ENCODE measurements at regions of chr1 and their contacts with region 1.

Region 1: DNA sequence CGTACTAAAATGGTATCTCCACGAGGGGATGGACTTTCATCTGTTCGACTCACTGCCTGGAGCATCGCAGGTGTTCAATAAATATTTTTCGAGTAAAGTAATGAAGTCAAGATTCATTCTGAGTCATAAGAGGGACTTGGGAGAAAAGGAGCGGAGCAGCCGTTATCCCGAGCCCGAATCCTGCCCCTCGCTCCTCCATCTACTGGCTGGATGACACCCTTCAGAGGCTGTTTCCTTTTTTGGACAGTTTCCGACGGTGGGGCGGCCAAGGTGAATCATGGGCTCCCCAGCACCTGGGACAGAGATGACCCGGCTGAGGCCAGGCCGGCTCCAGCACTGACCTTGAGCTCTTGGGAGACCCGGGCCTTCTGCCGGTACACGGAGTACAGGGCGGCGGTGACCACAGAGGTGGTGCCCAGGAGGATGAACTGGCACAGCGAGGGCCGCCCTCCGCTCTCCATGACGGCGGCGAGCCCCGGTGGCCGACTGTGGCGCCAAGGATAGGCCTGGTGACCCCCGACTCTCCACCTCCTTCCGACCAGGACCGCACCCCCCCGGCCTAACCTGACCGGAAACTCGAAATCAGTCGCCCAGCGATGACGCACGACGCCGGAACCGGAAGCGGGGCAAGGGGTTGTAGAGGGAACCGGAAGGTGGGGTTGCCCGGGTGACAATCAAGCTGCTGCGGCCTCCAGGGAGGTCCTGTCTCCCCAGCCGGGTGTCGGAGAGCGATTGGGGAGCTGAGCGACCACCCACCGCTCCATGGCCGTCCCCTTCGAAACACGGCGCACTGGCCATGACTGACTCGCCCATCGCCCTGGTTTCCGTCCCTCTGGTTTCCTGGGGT is at the start of gene MUL1:
- DNase-seq: peak; percentile 93 to 99
- H3K4me3 ChIP-seq: peak within 1 kb of the TSS; percentile 87
- CTCF ChIP-seq: no peak
- POLR2A ChIP-seq: no peak
- total RNA-seq, gene MUL1: 32.7 to 46.2 (median 37.4) TPM

Region 2: DNA sequence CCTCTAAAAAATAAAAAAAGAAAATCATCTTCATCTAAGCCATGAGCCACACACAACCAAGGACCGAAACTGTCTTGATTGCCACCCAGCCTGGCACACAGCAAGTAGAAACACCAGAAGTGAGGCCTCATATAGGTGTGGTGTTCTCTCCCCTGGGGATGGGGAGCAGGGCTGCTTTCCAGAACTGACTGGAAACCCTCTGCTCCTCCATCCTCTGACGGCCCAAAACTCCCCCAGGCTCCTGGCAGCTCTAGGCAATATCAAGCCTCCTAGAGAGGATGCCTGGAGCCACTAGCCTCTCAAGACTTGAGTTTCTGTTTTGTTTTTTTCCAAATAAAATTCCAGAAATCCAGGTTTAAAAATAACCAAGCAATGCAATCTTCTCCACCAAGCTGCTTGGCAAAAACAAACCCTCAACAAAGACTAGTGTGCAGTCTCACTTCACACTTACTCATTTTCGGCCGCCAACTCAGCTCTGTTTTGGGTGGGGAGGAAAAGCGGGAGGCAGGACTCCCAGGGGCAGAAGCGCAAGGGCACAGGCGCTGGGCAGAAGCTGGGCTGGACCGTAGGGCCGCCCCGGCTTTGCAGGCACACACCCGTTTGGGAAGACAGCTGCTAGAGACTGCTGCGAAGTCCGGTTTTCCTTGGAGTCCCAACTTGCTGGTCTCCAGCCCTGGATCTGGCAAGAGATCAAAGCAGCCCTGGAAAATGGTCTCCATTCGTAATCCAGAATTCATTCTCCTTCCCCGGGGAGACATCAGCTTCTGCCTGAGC is 944.3 kb before region 1 on chr1:
- intact Hi-C with region 1: no loop called
- DNase-seq: peak; percentile 50 to 90
- H3K4me3 ChIP-seq: no peak overlapping the region
- CTCF ChIP-seq: no peak
- POLR2A ChIP-seq: no peak

Region 3: GRCh38 chr1:20476265-20477038 is 31.3 kb before region 1 on chr1:
- intact Hi-C with region 1: loop called (anchors 2 kb)
- DNase-seq: no peak
- H3K4me3 ChIP-seq: no peak overlapping the region
- CTCF ChIP-seq: no peak
- POLR2A ChIP-seq: no peak